ENCODE measurements at regions of chr10 and their contacts with region 1.

Region 1: GRCh38 chr10:12214763-12215218 is 18.8 kb downstream of the CDC123 start:
- DNase-seq: no peak
- ATAC-seq: peak; percentile 54; the same call in 2 of the 3 replicates
- H3K4me3 ChIP-seq: no peak overlapping the region
- H3K27ac ChIP-seq: no peak overlapping the region
- H3K4me1 ChIP-seq: no peaks in the 10 kb centered on the region
- H3K27me3 ChIP-seq: no peaks in the 10 kb centered on the region
- CTCF ChIP-seq: peak; percentile 54 to 65 (median 59)
- EP300 ChIP-seq: no peak
- POLR2A ChIP-seq: no peak
- RAD21 ChIP-seq: peak; percentile 68

Region 2: DNA sequence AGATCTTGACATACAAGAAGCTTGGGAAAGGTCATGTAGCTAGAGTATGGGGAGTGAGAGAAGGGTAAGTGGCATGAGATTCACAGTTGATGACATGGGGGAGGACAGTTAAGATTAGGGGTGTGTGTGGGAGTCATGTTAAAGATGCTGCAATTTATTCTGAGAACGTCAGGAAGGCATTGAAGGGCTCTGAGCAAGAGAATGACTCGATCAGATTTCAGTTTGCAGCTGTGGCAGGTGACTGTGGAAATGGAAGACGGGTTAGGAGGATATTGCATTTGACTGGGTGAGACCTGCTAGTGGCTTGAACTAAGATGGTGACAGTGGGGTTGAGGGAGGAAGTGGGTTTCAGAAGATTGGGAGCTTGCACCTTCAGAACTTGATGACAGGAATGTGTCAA is 13.2 kb before region 1 on chr10:
- CTCF ChIA-PET with region 1: interaction called, 53 read pairs
- POLR2A ChIA-PET with region 1: interaction called, 3 read pairs
- RAD21 ChIA-PET with region 1: no interaction called
- SMC1A ChIA-PET with region 1: interaction called, 14 read pairs
- in situ Hi-C with region 1: no loop called
- intact Hi-C with region 1: no loop called
- DNase-seq: no peak
- ATAC-seq: peak; percentile 15; the same call in 2 of the 3 replicates
- H3K4me3 ChIP-seq: no peak overlapping the region
- H3K27ac ChIP-seq: no peak overlapping the region
- H3K4me1 ChIP-seq: peaks cover 7% of the 10 kb centered on the region; the same call in 1 of the 2 replicates
- H3K27me3 ChIP-seq: no peaks in the 10 kb centered on the region
- CTCF ChIP-seq: no peak
- EP300 ChIP-seq: no peak
- POLR2A ChIP-seq: no peak
- RAD21 ChIP-seq: no peak

Region 3: DNA sequence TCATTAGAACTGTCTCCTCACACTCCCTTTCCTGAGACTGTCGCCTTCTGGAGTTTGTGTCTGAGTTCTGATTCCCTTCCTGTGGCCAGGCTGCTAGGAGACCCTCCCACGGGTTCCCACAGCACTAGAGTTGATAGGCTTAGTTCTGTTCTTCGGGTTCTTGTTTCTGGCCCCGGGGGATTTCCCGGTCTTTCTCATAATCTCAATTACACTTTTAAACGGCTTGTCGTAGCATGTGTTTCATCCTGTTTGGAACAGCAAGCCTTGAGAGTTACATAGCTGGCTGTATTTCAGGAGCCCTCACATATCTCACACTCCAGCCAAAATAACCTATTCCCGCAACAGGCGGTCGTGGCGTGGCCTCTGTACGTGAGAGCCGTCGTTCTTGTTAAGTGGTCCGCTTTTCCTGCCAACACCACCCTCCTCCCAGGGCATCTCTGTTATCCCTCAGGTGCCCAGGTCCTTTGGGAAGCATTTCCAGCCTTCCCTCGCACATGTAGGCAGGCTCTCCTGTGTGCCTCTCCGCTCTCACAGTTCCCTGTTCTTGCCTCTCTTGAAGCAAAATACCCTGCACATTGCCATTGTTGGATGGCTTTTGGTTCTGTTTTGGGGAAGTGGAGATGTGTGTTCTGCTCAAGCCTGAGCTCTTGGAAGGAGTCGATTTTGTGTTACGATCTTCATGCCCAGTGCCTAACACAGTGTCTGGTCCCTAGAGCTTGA is 27.2 kb after region 1 on chr10:
- CTCF ChIA-PET with region 1: interaction called, 21 read pairs
- POLR2A ChIA-PET with region 1: no interaction called
- RAD21 ChIA-PET with region 1: interaction called, 7 read pairs
- SMC1A ChIA-PET with region 1: interaction called, 14 read pairs
- in situ Hi-C with region 1: no loop called
- intact Hi-C with region 1: no loop called
- DNase-seq: peak; percentile 41
- ATAC-seq: peak; percentile 69
- H3K4me3 ChIP-seq: peak overlapping the region; percentile 15; the same call in 1 of the 2 replicates
- H3K27ac ChIP-seq: peak overlapping the region; percentile 93
- H3K4me1 ChIP-seq: peaks cover 33% of the 10 kb centered on the region
- H3K27me3 ChIP-seq: no peaks in the 10 kb centered on the region
- CTCF ChIP-seq: no peak
- EP300 ChIP-seq: no peak
- POLR2A ChIP-seq: no peak
- RAD21 ChIP-seq: no peak

Region 4: GRCh38 chr10:12656518-12657142 is 441.8 kb after region 1 on chr10:
- CTCF ChIA-PET with region 1: interaction called, 88 read pairs
- POLR2A ChIA-PET with region 1: interaction called, 3 read pairs
- RAD21 ChIA-PET with region 1: interaction called, 38 read pairs
- SMC1A ChIA-PET with region 1: interaction called, 56 read pairs
- in situ Hi-C with region 1: no loop called
- intact Hi-C with region 1: loop called (anchors 2 kb)
- DNase-seq: no peak
- ATAC-seq: peak; percentile 89
- H3K4me3 ChIP-seq: no peak overlapping the region
- H3K27ac ChIP-seq: no peak overlapping the region
- H3K4me1 ChIP-seq: peaks cover 5% of the 10 kb centered on the region
- H3K27me3 ChIP-seq: no peaks in the 10 kb centered on the region
- CTCF ChIP-seq: peak; percentile 65 to 76 (median 66)
- EP300 ChIP-seq: no peak
- POLR2A ChIP-seq: no peak
- RAD21 ChIP-seq: peak; percentile 85

Region 5: DNA sequence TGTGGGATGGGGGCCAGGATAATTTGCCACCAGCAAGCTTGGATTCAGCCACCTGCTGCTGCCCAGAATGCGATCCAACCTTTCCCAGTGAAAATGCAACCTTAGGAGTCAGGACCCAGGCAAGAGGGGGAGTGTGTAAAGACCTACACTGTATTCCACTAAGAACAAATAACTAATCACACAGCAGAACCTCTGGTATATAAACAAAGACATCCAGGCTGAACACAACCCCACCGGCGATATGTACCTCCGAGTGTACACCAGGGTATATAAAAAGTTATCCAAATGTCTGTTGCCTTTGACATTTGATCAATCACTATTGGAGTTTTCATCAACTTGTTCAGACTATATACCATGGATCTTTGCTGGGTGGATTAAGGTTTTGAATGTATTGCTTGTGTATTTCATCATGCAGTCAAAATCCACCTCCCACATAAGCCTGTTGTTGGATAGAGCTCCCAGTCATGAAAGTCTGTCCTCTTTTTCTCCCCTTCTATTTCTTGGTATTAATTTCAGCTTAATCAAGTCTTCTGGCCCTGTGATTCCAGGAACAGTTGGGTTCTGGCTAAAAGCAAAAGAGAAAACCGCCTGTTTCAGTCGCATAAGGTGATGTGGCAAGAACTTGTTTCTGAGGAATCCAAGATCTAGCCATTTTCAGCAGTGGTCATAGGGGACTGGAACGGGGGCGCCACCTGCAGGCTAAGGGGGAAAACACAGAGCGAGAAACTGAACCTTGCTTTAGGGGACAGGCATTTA is 496.0 kb after region 1 on chr10:
- CTCF ChIA-PET with region 1: interaction called, 130 read pairs
- POLR2A ChIA-PET with region 1: interaction called, 5 read pairs
- RAD21 ChIA-PET with region 1: interaction called, 13 read pairs
- SMC1A ChIA-PET with region 1: interaction called, 59 read pairs
- in situ Hi-C with region 1: no loop called
- intact Hi-C with region 1: loop called (anchors 1 kb)
- DNase-seq: peak; percentile 26
- ATAC-seq: peak; percentile 98
- H3K4me3 ChIP-seq: no peak overlapping the region
- H3K27ac ChIP-seq: peak overlapping the region; percentile 43; the same call in 1 of the 2 replicates
- H3K4me1 ChIP-seq: peaks cover 2% of the 10 kb centered on the region; the same call in 1 of the 2 replicates
- H3K27me3 ChIP-seq: no peaks in the 10 kb centered on the region
- CTCF ChIP-seq: peak; percentile 93 to 97 (median 94)
- EP300 ChIP-seq: no peak
- POLR2A ChIP-seq: no peak
- RAD21 ChIP-seq: peak; percentile 97

Measured in GM12878 (cell line).